Activated CD8-positive, alpha-beta T cell treated with anti-CD3 and anti-CD28 coated beads, Interleukin-2, amount 10 ng/mL, durations not matched to agents 7 days and 5 days (primary cell): ENCODE measurements at regions of chr14 and their contacts with region 1.

Region 1: DNA sequence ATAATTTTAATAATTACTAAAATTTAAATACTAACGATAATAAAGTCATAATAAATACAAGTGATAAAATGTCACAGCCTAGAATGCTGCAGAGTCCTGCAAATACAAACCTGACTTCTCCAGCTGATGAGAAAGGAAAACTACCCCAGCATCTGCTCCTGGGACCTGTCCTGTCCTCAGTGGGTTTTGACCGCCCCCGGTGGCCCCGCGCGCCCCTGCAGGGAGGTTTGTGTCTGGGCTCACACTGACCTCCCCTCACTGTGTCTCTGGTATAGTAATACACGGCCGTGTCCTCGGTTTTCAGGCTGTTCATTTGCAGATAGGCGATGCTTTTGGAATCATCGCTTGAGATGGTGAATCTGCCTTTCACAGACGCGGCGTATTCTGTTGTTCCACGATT is 1139.4 kb downstream of the TMEM121 start:
- DNase-seq: no peak
- ATAC-seq: no peak
- H3K4me3 Mint-ChIP-seq: no peak overlapping the region
- H3K27ac Mint-ChIP-seq: no peak overlapping the region
- H3K4me1 Mint-ChIP-seq: peaks cover 12% of the 10 kb centered on the region
- H3K27me3 Mint-ChIP-seq: peaks cover 44% of the 10 kb centered on the region

Region 2: DNA sequence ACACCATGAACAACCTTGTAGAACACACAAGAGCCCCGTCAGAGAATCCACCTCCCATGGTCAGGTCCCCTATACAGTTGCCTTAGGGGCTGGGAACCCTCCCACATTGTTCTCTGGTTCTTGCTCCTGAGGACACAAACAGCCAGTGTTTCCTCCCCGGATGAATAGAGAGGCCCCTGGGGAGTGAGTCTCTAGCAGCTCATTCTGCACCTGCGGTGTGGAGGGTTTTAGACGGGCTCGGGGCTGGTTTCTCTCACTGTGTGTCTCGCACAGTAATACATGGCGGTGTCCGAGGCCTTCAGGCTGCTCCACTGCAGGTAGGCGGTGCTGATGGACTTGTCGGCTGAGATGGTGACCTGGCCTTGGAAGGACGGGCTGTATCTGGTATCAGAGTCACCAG is 87.3 kb before region 1 on chr14:
- CTCF ChIA-PET with region 1: no interaction called
- POLR2A ChIA-PET with region 1: no interaction called
- DNase-seq: no peak
- ATAC-seq: no peak
- H3K4me3 Mint-ChIP-seq: no peak overlapping the region
- H3K27ac Mint-ChIP-seq: no peak overlapping the region
- H3K4me1 Mint-ChIP-seq: no peaks in the 10 kb centered on the region
- H3K27me3 Mint-ChIP-seq: peaks cover 12% of the 10 kb centered on the region

Region 3: DNA sequence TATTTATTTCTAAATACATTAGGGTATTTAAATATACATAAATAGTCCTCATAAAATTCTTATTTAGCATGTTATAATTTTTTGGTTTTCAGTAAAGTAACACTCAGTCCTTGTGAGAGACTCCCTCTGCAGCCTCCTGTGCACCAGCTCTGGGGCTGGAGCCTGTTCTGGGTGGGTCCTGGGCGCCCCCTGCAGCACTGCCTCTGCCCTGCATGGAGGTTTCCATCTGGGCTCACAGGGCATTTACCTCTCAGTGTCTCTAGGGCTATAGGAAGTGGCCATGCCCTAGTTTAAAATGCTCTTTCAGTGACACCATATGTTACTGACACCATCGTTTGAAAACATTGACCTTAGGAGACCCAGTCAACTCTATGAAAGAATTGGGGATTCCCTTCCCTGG is 15.8 kb after region 1 on chr14:
- CTCF ChIA-PET with region 1: interaction called, 48 read pairs
- POLR2A ChIA-PET with region 1: no interaction called
- DNase-seq: no peak
- ATAC-seq: peak; percentile 92
- H3K4me3 Mint-ChIP-seq: no peak overlapping the region
- H3K27ac Mint-ChIP-seq: no peak overlapping the region
- H3K4me1 Mint-ChIP-seq: no peaks in the 10 kb centered on the region
- H3K27me3 Mint-ChIP-seq: peaks cover 39% of the 10 kb centered on the region

Region 4: DNA sequence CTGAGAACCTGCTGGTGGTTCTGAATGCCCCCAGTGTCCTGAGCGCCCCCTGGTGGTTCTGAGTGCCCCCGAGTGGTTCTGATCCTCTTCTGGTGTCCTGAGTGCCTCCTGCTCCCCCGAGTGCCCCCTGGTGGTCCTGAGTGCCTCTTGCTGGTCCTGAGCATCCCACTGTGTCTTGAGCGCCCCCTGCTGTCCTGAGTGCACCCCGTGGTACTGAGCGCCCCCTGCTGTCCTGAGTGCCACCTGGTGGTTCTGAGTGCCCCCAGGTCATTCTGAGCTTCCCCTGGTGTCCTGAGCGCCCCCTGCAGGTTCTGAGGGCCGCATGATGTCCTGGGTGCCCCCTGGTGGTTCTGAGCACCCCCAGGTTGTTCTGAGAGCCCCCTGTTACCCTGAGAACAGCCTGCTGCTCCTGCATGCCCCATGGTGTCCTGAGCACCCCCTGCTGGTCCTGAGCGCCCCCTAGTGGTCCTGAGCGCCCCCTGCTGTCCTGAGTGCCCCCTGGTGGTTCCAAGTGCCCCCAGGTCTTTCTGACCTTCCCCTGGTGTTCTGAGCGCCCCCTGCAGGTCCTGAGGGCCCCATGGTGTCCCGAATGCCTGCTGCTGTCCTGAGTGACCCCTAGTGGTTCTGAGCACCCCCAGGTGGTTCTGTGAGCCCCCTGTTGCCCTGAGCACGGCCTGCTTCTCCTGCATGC is 25.9 kb after region 1 on chr14:
- CTCF ChIA-PET with region 1: interaction called, 42 read pairs
- POLR2A ChIA-PET with region 1: no interaction called
- DNase-seq: peak; percentile 72
- ATAC-seq: peak; percentile 16
- H3K4me3 Mint-ChIP-seq: no peak overlapping the region
- H3K27ac Mint-ChIP-seq: no peak overlapping the region
- H3K4me1 Mint-ChIP-seq: peaks cover 32% of the 10 kb centered on the region
- H3K27me3 Mint-ChIP-seq: peaks cover 10% of the 10 kb centered on the region

Region 5: DNA sequence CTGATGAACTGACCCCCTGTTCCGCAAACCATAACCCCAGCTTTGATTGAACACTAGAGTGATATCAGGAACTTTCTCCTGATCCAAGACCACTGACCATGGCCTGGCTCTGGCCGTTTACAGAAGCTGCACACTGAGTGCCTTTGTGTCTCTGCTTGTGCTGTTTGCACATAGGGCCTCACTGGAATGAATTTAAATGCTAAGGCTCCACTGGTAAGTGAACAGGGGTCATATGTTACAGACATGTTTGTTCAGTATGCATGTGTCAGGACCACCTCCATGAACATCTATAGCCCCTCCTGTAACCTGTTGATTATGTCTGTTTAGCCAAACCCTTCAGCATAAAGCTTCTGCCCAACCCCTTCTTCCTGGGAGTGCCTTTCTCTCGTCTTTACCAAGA is 100.3 kb after region 1 on chr14:
- CTCF ChIA-PET with region 1: interaction called, 16 read pairs
- POLR2A ChIA-PET with region 1: no interaction called
- DNase-seq: no peak
- ATAC-seq: no peak
- H3K4me3 Mint-ChIP-seq: no peak overlapping the region
- H3K27ac Mint-ChIP-seq: no peak overlapping the region
- H3K4me1 Mint-ChIP-seq: peaks cover 49% of the 10 kb centered on the region
- H3K27me3 Mint-ChIP-seq: peaks cover 5% of the 10 kb centered on the region